ENCODE measurements at regions of chr12 and their contacts with region 1.

Region 1: GRCh38 chr12:8226355-8226754 is 1.1 kb downstream of the FAM90A1 start:
- DNase-seq: no peak
- ATAC-seq: no peak
- H3K4me3 ChIP-seq: no peak overlapping the region
- H3K27ac ChIP-seq: no peak overlapping the region
- H3K4me1 ChIP-seq: no peaks in the 10 kb centered on the region
- H3K27me3 ChIP-seq: no peaks in the 10 kb centered on the region

Region 2: GRCh38 chr12:7758758-7759140 is 467.6 kb before region 1 on chr12:
- intact Hi-C with region 1: no loop called
- DNase-seq: no peak
- ATAC-seq: no peak
- H3K4me3 ChIP-seq: no peak overlapping the region
- H3K27ac ChIP-seq: no peak overlapping the region
- H3K4me1 ChIP-seq: no peaks in the 10 kb centered on the region
- H3K27me3 ChIP-seq: no peaks in the 10 kb centered on the region

Region 3: DNA sequence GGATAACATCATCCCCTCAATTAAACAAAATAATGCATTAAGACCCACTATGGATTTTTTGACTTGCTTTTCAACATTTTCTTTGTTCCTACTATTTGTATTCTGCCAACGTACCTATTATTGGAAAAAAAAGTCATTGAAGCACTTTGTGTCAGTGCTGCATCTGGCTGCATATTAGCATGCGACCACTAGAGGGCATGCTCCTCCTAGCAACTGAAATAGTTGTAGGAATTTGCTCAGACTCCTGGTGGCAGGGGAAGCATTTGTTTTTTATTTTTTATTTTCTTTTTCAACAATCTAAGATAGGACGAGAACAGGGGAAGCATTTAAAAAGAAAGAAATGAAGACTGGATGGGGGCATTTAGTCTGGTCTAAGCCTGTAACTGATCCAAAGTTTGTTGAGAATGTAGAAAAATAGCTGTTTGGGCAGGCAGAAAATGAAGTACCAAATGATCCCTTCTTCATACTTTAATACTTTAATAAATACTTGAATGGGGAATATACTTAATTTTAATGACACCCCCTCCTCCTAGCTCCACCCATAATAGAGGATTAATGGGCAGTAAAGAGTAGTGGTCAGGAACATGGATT is 117.5 kb before region 1 on chr12:
- intact Hi-C with region 1: loop called in 1 of 4 experiments (anchors 5 kb)
- DNase-seq: peak; percentile 67 to 88 (median 85)
- ATAC-seq: peak; percentile 57 to 61
- H3K4me3 ChIP-seq: no peak overlapping the region
- H3K27ac ChIP-seq: no peak overlapping the region
- H3K4me1 ChIP-seq: no peaks in the 10 kb centered on the region
- H3K27me3 ChIP-seq: no peaks in the 10 kb centered on the region